MCF 10A (cell line): ENCODE measurements at regions of chr12 and their contacts with region 1.

Region 1: GRCh38 chr12:118150625-118151024 is 14.7 kb downstream of the PEBP1 start:
- DNase-seq: no peak
- H3K4me3 Mint-ChIP-seq: no peak overlapping the region
- H3K27ac Mint-ChIP-seq: no peak overlapping the region
- H3K4me1 Mint-ChIP-seq: no peaks in the 10 kb centered on the region
- H3K27me3 Mint-ChIP-seq: no peaks in the 10 kb centered on the region
- CTCF ChIP-seq: no peak

Region 2: GRCh38 chr12:117936722-117937484 is 213.7 kb before region 1 on chr12:
- CTCF ChIA-PET with region 1: no interaction called
- POLR2A ChIA-PET with region 1: no interaction called
- intact Hi-C with region 1: no loop called
- DNase-seq: no peak
- H3K4me3 Mint-ChIP-seq: no peak overlapping the region
- H3K27ac Mint-ChIP-seq: no peak overlapping the region
- H3K4me1 Mint-ChIP-seq: no peaks in the 10 kb centered on the region
- H3K27me3 Mint-ChIP-seq: no peaks in the 10 kb centered on the region
- CTCF ChIP-seq: no peak

Region 3: DNA sequence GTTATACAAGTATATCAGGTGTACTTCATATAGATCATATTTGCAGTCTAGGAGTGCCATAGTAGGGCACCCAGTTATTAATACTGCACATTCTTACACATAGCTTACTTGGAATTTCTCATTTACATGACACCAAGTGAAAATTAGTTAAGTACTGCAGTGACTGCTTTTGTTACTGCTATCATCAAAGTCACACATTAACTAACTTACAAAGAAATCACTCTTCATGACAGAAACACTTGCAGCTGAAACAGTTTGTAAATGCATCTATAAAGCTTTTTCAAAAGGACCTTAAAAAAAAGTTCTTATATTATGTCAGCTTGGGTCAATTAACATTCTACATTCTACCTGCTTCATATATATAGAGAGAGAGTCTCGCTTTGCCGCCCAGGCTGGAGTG is 151.9 kb before region 1 on chr12:
- CTCF ChIA-PET with region 1: no interaction called
- POLR2A ChIA-PET with region 1: no interaction called
- intact Hi-C with region 1: no loop called
- DNase-seq: no peak
- H3K4me3 Mint-ChIP-seq: no peak overlapping the region
- H3K27ac Mint-ChIP-seq: no peak overlapping the region
- H3K4me1 Mint-ChIP-seq: no peaks in the 10 kb centered on the region
- H3K27me3 Mint-ChIP-seq: no peaks in the 10 kb centered on the region
- CTCF ChIP-seq: no peak

Region 4: DNA sequence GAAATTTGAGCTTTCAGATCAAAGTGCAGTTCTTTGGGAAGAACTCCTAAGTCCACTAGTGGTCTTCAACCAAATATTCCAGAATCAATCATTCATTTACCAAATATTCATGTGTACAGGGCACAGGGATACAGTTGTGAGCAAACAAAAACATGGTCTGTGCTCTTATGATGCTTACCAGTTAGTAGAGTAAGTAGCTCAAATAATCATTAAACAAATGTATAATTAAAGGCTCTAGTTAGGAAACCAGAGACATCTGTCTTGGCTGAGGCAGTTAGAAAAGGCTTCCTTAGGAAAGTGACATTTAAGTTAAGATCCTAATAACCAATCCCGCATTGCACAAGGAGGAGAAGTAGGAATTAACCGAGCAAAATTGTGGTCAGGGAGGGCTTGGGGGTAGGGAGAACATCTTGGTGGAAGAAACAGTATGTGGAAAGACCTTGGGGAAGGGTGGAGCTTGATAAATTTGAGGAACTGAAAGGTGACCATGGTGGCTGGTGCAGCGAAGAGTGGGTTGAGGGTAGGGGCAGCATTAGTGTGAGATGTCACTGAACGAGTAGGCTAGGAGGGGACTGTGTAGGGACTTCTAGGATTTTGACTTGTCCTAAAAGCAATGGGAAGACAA is 25.3 kb after region 1 on chr12:
- CTCF ChIA-PET with region 1: interaction called, 11 read pairs
- POLR2A ChIA-PET with region 1: no interaction called
- intact Hi-C with region 1: no loop called
- DNase-seq: no peak
- H3K4me3 Mint-ChIP-seq: no peak overlapping the region
- H3K27ac Mint-ChIP-seq: no peak overlapping the region
- H3K4me1 Mint-ChIP-seq: no peaks in the 10 kb centered on the region
- H3K27me3 Mint-ChIP-seq: no peaks in the 10 kb centered on the region
- CTCF ChIP-seq: no peak

Region 5: GRCh38 chr12:118189741-118190191 is 39.1 kb after region 1 on chr12:
- CTCF ChIA-PET with region 1: no interaction called
- POLR2A ChIA-PET with region 1: no interaction called
- intact Hi-C with region 1: no loop called
- DNase-seq: no peak
- H3K4me3 Mint-ChIP-seq: no peak overlapping the region
- H3K27ac Mint-ChIP-seq: peak overlapping the region; percentile 63
- H3K4me1 Mint-ChIP-seq: peaks cover 24% of the 10 kb centered on the region
- H3K27me3 Mint-ChIP-seq: no peaks in the 10 kb centered on the region
- CTCF ChIP-seq: no peak